Left cardiac atrium (tissue), 4 donors: ENCODE measurements at regions of chr11 and their contacts with region 1.

Region 1: DNA sequence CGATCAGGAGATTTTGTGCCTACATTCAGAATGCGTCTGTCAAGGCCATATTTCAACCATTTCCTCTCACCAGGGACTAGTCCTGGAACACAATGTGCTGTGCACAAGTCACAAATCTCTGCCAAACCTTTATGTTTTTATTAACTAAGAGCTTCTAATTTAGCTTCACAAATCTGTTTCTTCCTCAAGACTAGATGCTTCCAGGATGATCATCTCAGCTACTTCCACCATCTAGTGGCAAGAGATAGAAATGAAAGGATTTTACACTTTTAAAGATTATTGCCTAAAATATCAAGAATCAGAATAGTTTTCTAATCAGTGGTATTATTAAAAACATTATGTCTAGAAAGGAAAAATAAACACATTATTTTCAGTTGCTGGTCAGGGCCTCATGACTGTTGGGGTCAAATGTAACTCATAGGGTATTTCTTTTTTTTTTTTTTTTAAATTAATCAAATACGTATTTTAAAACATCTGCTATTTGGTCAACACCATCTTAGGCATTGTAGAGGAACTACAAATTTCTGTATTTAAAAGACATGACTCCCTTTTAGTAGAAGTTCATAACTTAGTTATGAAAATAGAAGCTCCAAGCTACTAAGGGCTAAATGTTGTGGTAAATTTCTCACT is 1102.6 kb downstream of the DLG2 start:
- DNase-seq: no peak
- ATAC-seq: no peak

Region 2: DNA sequence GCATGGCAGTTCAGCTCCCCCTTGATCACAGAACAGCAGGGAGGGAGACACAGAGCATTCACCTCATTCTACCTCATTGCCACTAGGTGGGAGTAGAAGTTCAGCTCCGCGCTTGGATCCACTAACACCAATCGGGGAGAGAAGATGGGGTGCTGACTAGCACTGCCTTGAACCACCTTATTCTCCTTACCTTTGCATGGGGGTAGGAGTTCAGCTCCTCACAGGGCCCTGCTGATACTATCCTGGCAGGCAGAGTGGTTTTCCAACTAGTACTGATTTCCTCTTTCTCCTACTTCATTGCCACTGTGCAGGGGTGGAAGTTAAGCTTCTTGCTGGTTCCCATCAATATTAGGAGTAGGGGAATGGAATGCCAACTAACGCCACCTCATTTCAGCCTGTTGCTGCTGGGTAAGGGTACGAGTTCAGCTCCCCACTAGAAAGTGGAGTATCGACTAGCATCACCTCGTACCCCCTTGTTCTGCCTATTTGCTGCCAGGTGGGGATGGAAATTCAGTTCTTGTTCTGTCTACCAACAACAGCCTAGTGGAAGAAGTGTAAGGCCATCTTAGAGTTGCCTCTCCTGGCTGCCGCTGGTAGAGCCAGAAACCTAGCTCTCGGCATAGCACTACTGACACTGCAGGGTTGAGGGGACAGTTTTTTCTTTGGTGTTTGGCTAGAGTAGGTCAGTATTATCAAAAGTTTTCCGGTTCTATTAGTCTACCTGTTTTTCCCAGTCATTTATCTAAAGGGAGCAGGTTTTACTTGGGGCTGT is 687.5 kb before region 1 on chr11:
- intact Hi-C with region 1: loop called in 1 of 2 experiments (anchors 2 kb)
- DNase-seq: no peak
- ATAC-seq: peak; percentile 72 to 94

Region 3: DNA sequence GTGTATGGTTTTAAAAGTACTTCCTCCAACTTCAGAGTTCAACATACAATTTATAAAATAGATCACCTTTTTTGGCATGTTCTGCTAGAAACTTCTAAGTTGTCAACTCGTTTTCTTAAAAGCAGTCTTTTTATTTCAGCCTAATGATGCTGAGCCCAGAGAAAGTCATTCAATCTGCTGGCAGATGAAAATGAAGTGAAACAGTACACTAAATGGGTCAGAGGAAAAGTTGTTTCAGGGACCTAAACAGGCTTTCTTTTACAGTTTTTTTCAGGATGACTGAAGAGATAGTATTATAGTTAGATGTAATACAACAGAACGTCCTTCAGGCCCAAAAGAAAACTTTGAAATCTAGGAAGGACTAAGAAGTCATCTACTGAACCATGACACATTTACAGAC is 395.7 kb before region 1 on chr11:
- intact Hi-C with region 1: loop called in 1 of 2 experiments (anchors 10 kb)
- DNase-seq: no peak
- ATAC-seq: no peak

Region 4: GRCh38 chr11:84140161-84140891 is 384.2 kb before region 1 on chr11:
- intact Hi-C with region 1: no loop called
- DNase-seq: no peak
- ATAC-seq: no peak

Region 5: GRCh38 chr11:84564180-84564866 is 39.8 kb after region 1 on chr11:
- intact Hi-C with region 1: no loop called
- DNase-seq: peak; percentile 26
- ATAC-seq: peak in 1 of 2 donors; percentile 33